Activated T-helper 2 cell treated with anti-CD3 and anti-CD28 coated beads, Interferon-gamma antibody, Interleukin-2, Interleukin-4, amounts not matched to agents 10 μg/mL and 5 μg/mL and 100 μg/mL, durations not matched to agents 14 hours and 24 hours and 36 hours (primary cell): ENCODE measurements at regions of chr7 and their contacts with region 1.

Region 1: DNA sequence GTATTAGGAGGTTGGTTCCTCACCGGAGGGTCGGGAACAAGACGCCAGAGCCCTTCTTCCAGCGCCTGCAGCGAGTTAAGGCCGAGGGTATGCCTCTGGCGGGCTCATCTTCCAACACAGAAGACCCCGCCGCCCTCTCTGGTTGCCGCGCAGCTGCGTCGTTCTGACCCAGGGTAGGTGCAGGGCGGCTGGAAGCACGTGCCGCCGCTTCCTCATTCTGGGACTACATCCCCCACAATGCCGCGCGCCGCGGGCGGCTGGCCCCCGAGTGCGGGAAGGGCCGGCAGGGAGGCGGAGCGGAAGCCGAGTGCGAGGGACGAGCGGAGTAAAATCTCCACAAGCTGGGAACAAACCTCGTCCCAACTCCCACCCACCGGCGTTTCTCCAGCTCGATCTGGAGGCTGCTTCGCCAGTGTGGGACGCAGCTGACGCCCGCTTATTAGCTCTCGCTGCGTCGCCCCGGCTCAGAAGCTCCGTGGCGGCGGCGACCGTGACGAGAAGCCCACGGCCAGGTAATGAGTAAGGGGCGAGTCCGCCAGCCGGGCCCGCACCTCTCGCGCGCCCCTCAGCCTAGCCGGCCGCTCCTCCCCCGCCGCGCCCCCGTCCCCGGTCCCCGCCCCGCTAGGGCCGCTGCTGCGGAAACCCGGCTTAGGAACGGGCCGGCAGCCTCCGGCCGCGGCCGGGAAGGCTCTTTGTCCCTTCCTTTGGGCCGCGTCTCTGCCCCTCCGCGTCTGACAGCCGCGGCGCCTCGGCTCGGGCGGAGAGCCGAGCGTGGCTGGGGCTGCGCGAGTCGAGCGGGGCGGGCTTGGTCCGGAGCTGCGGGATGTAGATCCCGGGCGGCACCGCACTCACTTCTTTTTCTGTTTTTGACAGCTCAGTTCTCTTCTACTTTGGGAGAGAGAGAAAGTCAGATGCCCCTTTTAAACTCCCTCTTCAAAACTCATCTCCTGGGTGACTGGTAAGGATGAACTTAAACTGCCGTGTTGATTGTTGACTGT is at the start of gene CCDC126:
- DNase-seq: peak; percentile 73
- H3K4me3 Mint-ChIP-seq: peak within 1 kb of the TSS; percentile 89
- H3K27ac Mint-ChIP-seq: peak within 1 kb of the TSS; percentile 78
- H3K4me1 Mint-ChIP-seq: peaks cover 53% of the 10 kb centered on the region
- H3K27me3 Mint-ChIP-seq: peaks cover 5% of the 10 kb centered on the region
- total RNA-seq, gene CCDC126: 6.1 and 6.3 TPM in 2 replicates

Region 2: DNA sequence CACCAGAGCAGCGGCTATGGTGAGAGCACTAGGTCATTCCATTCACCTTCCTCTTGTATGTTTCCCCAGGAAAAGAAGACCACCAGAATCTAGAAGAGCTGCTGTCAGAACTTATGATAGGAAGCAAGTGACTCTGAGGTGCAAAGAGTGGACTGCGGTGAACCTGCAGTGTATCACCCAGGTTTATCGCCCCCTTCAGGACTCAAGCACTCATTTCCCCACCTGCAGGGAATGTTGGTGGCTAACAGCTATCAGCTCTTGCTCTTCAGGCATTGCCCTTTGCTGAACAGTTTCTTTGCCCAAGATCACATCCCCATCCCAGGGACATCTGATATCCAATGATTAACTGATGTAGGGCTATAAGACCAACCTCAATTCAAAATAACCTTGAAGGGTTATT is 936.7 kb before region 1 on chr7:
- intact Hi-C with region 1: loop called (anchors 10 kb)
- DNase-seq: no peak
- H3K4me3 Mint-ChIP-seq: no peak overlapping the region
- H3K27ac Mint-ChIP-seq: no peak overlapping the region
- H3K4me1 Mint-ChIP-seq: peaks cover 37% of the 10 kb centered on the region
- H3K27me3 Mint-ChIP-seq: peaks cover 38% of the 10 kb centered on the region

Region 3: DNA sequence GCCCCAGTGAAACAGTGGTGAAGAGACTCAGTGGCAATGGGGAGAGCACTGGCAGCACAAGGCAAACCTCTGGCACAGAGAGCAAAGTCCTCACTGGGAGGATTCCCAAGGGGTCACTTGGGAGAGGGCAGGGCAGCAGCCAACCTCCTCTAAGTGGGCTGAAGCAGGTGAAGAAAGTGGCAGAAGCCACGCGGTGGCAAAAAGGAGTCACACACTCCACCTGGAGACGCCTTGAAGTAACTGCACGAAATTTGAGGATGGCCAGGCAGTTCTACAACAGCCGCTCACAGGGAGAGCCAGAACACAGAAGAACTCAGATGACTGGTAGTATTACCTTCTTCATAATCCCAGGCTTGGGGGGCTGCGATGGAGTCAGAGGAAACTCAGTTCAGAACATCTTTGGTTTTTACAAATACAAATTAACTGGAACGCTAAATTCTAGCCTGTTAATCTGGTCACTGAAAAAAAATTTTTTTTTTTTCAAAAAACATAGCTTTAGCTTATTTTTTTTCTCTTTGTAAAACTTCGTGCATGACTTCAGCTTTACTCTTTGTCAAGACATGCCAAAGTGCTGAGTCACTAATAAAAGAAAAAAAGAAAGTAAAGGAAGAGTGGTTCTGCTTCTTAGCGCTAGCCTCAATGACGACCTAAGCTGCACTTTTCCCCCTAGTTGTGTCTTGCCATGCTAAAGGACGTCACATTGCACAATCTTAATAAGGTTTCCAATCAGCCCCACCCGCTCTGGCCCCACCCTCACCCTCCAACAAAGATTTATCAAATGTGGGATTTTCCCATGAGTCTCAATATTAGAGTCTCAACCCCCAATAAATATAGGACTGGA is 870.8 kb before region 1 on chr7:
- intact Hi-C with region 1: no loop called
- DNase-seq: peak; percentile 56
- H3K4me3 Mint-ChIP-seq: peak overlapping the region; percentile 31
- H3K27ac Mint-ChIP-seq: no peak overlapping the region
- H3K4me1 Mint-ChIP-seq: peaks cover 33% of the 10 kb centered on the region
- H3K27me3 Mint-ChIP-seq: peaks cover 35% of the 10 kb centered on the region

Region 4: GRCh38 chr7:23474094-23474828 is 123.1 kb before region 1 on chr7:
- intact Hi-C with region 1: loop called (anchors 5 kb)
- DNase-seq: peak; percentile 94
- H3K4me3 Mint-ChIP-seq: peak overlapping the region; percentile 85
- H3K27ac Mint-ChIP-seq: peak overlapping the region; percentile 65
- H3K4me1 Mint-ChIP-seq: peaks cover 35% of the 10 kb centered on the region
- H3K27me3 Mint-ChIP-seq: peaks cover 35% of the 10 kb centered on the region

Region 5: DNA sequence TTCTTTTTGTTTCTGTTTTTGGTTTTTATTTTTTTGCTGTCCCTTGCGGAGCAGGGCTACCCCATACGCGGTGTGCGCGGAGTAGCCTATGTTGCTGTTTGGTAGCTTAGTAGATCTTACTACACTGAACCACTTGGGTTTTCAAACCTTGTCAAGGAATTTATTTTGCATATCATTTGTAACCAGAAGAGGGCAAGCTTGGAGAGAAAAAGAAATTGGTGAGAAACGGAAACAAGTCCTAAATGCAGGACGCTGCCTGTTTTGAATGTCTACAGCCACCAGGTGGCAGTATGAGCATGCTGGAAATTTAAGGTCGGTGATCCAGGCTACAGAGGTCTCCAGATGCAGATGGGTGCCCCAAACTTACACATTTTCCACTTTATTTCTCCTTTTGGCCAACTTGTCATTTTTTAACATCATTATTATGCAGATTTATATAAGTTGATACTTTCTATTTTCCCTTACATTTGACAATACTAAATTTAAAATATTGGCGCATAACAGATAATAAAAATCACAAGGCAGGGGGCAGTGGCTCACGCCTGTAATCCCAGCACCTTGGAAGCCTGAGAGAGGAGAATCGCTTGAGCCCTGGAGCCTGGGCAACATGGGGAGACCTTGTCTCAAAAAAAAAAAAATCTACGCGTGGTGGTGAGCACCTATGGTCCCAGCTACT is 50.4 kb before region 1 on chr7:
- intact Hi-C with region 1: loop called (anchors 1 kb)
- DNase-seq: peak; percentile 72
- H3K4me3 Mint-ChIP-seq: no peak overlapping the region
- H3K27ac Mint-ChIP-seq: no peak overlapping the region
- H3K4me1 Mint-ChIP-seq: peaks cover 7% of the 10 kb centered on the region
- H3K27me3 Mint-ChIP-seq: peaks cover 7% of the 10 kb centered on the region

Region 6: DNA sequence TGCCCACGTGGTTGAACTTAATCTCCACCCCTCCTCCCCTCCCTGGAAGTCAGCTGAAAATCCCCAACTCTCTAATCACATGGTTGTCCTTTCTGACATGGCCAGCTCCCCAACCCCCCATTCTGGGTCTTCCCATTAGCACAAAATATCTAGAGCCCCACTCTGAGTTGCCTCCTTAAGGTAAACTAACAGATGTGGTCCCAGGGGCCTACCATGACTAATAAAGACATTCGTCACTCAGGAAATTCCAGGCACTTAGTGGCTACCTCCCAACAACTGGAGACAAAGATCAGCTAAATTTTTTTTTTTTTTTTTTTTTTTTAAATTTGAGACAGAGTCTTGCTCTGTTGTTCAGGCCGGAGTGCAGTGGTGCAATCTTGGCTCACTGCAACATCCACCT is 20.8 kb after region 1 on chr7:
- intact Hi-C with region 1: no loop called
- DNase-seq: no peak
- H3K4me3 Mint-ChIP-seq: no peak overlapping the region
- H3K27ac Mint-ChIP-seq: no peak overlapping the region
- H3K4me1 Mint-ChIP-seq: no peaks in the 10 kb centered on the region
- H3K27me3 Mint-ChIP-seq: no peaks in the 10 kb centered on the region

Region 7: DNA sequence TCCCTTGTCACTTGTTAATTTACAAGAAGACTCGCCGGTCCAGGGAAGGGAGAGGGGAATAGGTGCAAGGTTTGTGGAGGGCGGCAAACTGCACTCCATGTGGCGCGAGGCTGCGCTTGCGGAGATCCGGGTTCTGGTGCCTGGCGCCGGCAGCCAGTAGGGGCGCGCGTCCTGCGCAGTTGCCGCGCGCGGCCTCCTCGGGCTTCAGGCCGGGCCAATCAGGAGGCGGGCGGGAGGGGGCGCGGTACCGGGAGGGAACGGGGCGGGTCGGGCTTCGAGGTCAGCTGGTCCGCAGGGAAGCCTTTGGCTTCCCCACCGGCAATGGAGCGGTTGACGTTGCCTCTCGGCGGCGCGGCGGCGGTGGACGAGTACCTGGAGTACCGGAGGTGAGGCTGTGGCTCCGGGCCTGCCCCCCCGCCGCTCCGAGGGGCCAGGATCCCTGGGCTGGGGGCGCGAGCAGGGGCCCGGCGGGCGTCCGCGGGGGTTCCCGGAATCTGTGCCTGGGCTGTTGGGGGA is 82.6 kb after region 1 on chr7 and contains the start of gene FAM221A:
- intact Hi-C with region 1: loop called (anchors 1 kb)
- DNase-seq: peak; percentile 66
- H3K4me3 Mint-ChIP-seq: peak within 1 kb of the TSS; percentile 85
- H3K27ac Mint-ChIP-seq: peak within 1 kb of the TSS; percentile 55
- H3K4me1 Mint-ChIP-seq: peaks cover 6% of the 10 kb centered on the region
- H3K27me3 Mint-ChIP-seq: peaks cover 22% of the 10 kb centered on the region
- total RNA-seq, gene FAM221A: 6.2 and 6.7 TPM in 2 replicates

Region 8: DNA sequence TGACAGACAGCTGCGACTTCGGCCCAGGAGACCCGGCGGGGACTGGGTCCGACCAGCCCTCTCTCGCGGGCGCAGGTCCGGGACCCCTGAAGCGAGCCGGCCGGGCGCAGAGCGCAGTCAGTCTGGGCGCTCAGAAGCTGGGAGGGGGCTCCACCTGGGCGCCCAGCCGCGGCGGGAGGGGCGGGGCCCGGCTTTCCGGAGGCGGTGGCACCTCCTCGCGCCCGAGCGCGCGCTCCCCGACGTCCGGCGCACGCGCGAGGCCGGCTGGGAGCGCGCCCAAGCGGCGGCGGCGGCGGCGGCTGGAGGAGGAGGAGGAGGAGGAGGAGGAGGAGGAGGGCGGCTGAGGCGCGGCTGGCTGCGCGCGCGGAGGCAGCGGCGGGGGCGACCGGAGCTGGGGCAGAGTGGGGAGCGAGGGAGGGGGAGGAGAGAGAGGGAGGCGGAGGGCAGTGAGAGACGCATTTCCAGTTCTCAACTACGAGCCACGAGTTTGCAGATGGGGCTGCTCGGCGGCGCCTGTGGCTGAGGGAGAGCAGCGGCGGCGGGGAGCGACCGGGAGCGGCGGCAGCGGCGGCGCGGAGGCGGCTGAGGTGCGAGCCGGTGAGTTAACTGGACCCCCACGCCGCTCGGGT is 975.7 kb after region 1 on chr7 and contains the start of gene PALS2:
- intact Hi-C with region 1: loop called (anchors 10 kb)
- DNase-seq: peak; percentile 75
- H3K4me3 Mint-ChIP-seq: peak within 1 kb of the TSS; percentile 96
- H3K27ac Mint-ChIP-seq: peak within 1 kb of the TSS; percentile 89
- H3K4me1 Mint-ChIP-seq: peaks cover 26% of the 10 kb centered on the region
- H3K27me3 Mint-ChIP-seq: peaks cover 45% of the 10 kb centered on the region
- total RNA-seq, gene PALS2: 30.6 and 35.2 TPM in 2 replicates